H1 (cell line): ENCODE measurements at regions of chr7 and their contacts with region 1.

Region 1: GRCh38 chr7:42151309-42151708 is 85.7 kb downstream of the GLI3 start:
- DNase-seq: no peak
- H3K4me3 ChIP-seq: no peak overlapping the region
- H3K27ac ChIP-seq: no peak overlapping the region
- H3K4me1 ChIP-seq: peaks cover 2 to 15% (median 11%) of the 10 kb centered on the region in 4 experiments; a peak in 4 of 7 replicates
- H3K27me3 ChIP-seq: no peaks in the 10 kb centered on the region
- CTCF ChIP-seq: no peak
- EP300 ChIP-seq: no peak
- POLR2A ChIP-seq: no peak
- RAD21 ChIP-seq: no peak

Region 2: GRCh38 chr7:42138691-42139090 is 12.6 kb before region 1 on chr7:
- CTCF ChIA-PET with region 1: interaction called, 19 read pairs
- POLR2A ChIA-PET with region 1: interaction called, 10 read pairs
- DNase-seq: peak in 1 of 2 experiments; percentile 53
- H3K4me3 ChIP-seq: no peak overlapping the region
- H3K27ac ChIP-seq: no peak overlapping the region
- H3K4me1 ChIP-seq: peaks cover 2 to 17% (median 7%) of the 10 kb centered on the region in 4 experiments; a peak in 4 of 7 replicates
- H3K27me3 ChIP-seq: no peaks in the 10 kb centered on the region
- CTCF ChIP-seq: peak in 1 of 3 experiments; percentile 28; a peak in 1 of 4 replicates
- EP300 ChIP-seq: no peak
- POLR2A ChIP-seq: no peak
- RAD21 ChIP-seq: peak in 1 of 2 experiments; percentile 36; a peak in 2 of 4 replicates

Region 3: DNA sequence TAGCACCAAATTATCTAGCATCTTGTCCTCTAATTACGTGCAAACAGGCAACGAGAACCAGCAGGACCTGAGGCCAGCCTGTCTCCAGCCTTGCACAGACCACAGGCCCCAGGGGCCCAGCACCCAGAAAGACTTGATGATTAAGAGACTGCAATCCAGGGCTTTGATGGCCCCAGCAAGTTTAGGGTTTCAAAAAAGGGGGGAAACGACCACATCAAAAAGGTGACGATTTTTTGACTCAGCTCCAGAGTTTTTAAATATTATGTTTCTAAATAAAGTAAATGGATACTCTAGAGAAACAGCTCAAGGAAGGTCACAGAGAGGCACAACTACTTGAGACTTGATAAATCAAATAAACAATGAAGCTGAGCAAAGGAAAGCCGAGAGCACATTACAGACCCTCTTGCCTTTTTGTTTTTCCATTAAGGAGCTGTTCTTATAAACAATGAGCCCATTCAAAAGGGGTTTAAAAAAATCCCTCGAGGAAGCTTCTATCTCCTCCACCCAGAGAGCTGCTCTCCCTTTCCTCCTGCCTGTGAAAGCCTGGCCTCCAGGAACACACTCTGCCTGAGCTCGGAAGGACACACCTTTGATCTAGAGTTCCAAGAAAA is 41.6 kb after region 1 on chr7:
- CTCF ChIA-PET with region 1: no interaction called
- POLR2A ChIA-PET with region 1: no interaction called
- DNase-seq: peak in 1 of 2 experiments; percentile 23
- H3K4me3 ChIP-seq: no peak overlapping the region
- H3K27ac ChIP-seq: no peak overlapping the region
- H3K4me1 ChIP-seq: peaks cover 0 to 3% (median 3%) of the 10 kb centered on the region in 4 experiments; a peak in 6 of 7 replicates
- H3K27me3 ChIP-seq: no peaks in the 10 kb centered on the region; a peak in 1 of 7 replicates
- CTCF ChIP-seq: no peak
- EP300 ChIP-seq: no peak
- POLR2A ChIP-seq: no peak
- RAD21 ChIP-seq: no peak

Region 4: DNA sequence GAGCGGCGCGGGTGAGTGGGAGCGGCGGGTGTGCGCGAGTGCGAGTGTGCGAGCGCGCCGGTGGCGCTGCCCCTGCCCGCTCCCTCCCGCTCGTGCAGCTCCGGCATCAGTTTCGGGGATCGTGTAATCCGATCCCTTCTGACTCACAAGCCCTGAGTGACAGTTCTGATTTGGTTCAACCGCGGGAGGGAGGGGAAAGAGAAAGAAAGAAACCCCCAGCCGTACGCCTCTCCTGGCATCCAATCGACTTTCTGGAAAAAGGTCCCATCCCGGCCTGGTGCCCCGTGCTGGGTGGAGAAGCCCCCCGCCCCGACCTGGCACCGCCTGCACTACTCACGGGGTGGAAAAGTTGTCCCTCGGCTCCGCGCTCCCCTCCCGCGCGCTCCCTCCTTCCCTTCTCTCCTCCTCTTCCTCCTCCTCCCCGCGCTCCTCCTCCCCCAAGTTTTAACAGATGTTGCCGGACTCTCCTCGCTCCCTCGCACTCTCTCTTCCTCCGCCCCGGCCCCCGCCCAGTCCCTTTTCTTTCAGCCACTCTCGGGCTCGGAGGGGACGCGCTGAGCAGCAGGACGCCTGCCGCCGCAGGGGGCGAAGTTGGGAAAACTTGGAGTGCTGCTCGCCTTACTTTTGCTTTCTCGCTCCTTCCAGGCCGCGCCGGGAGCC is 86.0 kb after region 1 on chr7 and contains the start of gene GLI3:
- CTCF ChIA-PET with region 1: no interaction called
- POLR2A ChIA-PET with region 1: no interaction called
- DNase-seq: peak in 1 of 2 experiments; percentile 91
- H3K4me3 ChIP-seq: peak within 1 kb of the TSS; percentile 63 to 94 (median 85)
- H3K27ac ChIP-seq: peak within 1 kb of the TSS; percentile 63; the same call in 1 of the 2 replicates
- H3K4me1 ChIP-seq: peaks cover under 1 to 23% (median 12%) of the 10 kb centered on the region in 4 experiments; a peak in 6 of 7 replicates
- H3K27me3 ChIP-seq: peaks cover 0 to 24% (median 13%) of the 10 kb centered on the region in 4 experiments; a peak in 5 of 7 replicates
- CTCF ChIP-seq: no peak
- EP300 ChIP-seq: no peak
- POLR2A ChIP-seq: no peak
- RAD21 ChIP-seq: peak in 1 of 2 experiments; percentile 14; a peak in 3 of 4 replicates
- total RNA-seq, gene GLI3: 31.1 and 35.4 TPM in 2 replicates

Region 5: DNA sequence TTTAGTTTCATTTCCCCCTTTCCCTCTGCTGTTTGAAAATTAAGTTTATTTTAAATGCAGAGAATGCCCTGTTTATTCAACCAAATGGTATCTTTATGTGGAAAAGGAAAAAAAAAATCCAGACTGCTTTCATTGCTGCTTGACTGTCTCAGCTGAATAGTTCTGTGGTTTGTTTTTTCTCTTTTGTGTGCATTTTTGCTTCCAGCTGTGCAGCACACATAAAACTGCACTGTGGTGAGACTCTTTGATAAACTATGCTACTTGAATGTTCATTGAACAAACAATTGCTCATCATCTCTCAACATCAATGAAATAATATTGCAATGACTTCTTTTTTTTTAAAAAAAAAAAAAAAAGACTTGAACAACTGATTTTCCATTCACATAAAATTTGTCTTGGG is 164.3 kb after region 1 on chr7:
- CTCF ChIA-PET with region 1: no interaction called
- POLR2A ChIA-PET with region 1: no interaction called
- DNase-seq: no peak
- H3K4me3 ChIP-seq: no peak overlapping the region
- H3K27ac ChIP-seq: no peak overlapping the region
- H3K4me1 ChIP-seq: 0 out of 7 replicates have a peak, but pooled peaks cover 0 to 3% (median 0%) of the 10 kb centered on the region in 4 experiments
- H3K27me3 ChIP-seq: no peaks in the 10 kb centered on the region
- CTCF ChIP-seq: no peak
- EP300 ChIP-seq: no peak
- POLR2A ChIP-seq: no peak
- RAD21 ChIP-seq: no peak